ENCODE measurements at regions of chr18 and their contacts with region 1.

Region 1: GRCh38 chr18:70082430-70082829 is 123.1 kb downstream of the RTTN start:
- DNase-seq: no peak
- ATAC-seq: no peak

Region 2: GRCh38 chr18:68847219-68847837 is 1235.1 kb before region 1 on chr18:
- intact Hi-C with region 1: loop called (anchors 2 to 10 kb)
- DNase-seq: no peak
- ATAC-seq: no peak

Region 3: DNA sequence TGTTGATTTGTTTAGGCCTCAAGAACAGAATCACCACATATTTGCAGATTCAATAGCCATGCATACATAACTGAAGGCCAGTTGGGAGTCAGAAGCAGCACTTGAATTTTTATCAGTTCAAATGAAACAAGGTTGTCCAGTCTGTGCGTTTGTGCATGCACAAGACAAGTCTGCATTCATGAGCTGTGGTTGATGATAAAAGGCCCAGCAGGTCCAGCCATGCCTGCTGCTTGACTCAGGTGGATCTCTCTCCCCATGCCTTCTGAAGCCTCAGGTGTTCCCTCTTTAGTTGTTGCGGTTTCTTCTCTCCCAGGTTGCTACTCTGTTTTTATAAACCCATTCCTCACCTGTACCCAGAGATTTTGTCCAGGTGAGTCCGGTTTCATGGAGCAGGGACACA is 1160.0 kb before region 1 on chr18:
- intact Hi-C with region 1: loop called in 1 of 2 experiments (anchors 5 kb)
- DNase-seq: no peak
- ATAC-seq: no peak

Region 4: DNA sequence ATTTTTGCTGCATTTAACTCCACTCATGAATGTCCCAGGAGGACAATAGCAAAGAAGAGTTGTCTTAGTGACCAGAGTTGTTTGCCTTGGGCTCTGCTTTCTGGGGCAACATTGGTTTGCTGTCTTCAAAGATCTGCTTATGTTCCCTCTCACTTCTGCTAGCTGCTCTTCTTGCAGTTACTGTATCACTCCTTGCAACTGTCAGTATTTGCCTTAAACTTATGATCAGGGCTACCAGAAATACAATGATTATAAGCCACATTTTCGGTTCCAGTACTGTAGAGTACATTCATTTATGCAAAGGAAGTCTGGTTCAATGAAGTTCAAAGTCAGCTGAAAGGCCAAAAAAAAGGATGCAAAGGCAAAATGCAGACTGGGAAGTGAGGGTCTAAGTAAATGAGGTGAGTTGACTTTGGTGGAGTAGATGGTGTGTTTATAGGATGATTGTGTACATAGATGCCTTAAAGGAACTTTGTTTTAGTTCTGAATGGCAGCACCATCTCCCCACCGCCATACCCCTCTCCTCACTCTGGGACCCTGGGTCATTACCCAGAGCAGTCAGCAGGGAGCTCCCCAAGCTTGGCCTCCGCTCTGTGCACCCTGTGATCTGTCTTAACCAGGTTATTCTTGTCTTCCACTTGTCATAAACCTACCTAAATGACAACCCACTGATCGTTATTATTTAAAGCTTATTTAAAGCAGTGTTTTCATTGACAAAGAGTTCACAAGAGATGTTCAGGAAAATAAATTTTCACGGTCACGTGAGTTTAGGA is 445.7 kb before region 1 on chr18:
- intact Hi-C with region 1: loop called in 1 of 2 experiments (anchors 5 kb)
- DNase-seq: no peak
- ATAC-seq: peak; percentile 30 to 54

Region 5: DNA sequence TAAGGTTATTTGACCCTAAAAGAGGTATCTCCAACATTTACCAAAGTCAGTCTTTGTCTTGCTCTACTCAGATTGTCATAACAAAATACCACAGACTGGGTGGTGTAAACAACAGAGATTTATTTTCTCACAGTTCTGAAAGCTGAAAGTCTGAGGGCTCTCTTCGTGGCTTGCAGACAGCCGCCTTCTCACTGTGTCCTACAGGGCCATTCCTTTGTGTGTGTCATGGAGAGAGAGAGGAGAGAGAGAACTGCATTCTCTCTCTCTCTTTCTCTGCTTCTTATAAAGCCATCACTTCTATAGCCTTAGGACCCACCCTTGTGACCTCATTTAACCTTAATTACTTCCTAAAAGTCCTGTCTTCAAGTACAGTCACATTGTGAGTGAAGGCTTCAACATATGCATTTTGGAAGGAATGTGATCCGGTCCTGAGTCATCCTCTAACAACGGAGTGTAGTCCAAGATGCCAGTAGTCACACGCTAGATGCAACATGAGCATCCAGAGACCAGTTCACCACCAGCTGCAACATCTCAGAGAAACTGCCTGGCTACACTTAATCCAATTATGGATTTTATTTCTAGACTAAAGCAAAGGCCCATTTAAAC is 265.0 kb before region 1 on chr18:
- intact Hi-C with region 1: no loop called
- DNase-seq: no peak
- ATAC-seq: peak; percentile 21 to 27